Activated CD8-positive, alpha-beta T cell treated with anti-CD3 and anti-CD28 coated beads, Interleukin-2, amount 10 ng/mL, durations not matched to agents 7 days and 5 days (primary cell): ENCODE measurements at regions of chr7 and their contacts with region 1.

Region 1: GRCh38 chr7:24290004-24290641 is 6.1 kb downstream of the NPY start:
- DNase-seq: peak; percentile 57
- ATAC-seq: peak; percentile 89
- H3K4me3 Mint-ChIP-seq: no peak overlapping the region
- H3K27ac Mint-ChIP-seq: no peak overlapping the region
- H3K4me1 Mint-ChIP-seq: peaks cover 10% of the 10 kb centered on the region
- H3K27me3 Mint-ChIP-seq: peaks cover 29% of the 10 kb centered on the region

Region 2: GRCh38 chr7:24227603-24228359 is 62.3 kb before region 1 on chr7:
- CTCF ChIA-PET with region 1: no interaction called
- POLR2A ChIA-PET with region 1: no interaction called
- DNase-seq: peak; percentile 25
- ATAC-seq: peak; percentile 79
- H3K4me3 Mint-ChIP-seq: no peak overlapping the region
- H3K27ac Mint-ChIP-seq: no peak overlapping the region
- H3K4me1 Mint-ChIP-seq: peaks cover 15% of the 10 kb centered on the region
- H3K27me3 Mint-ChIP-seq: peaks cover 21% of the 10 kb centered on the region

Region 3: GRCh38 chr7:24665564-24666294 is 375.6 kb after region 1 on chr7:
- CTCF ChIA-PET with region 1: interaction called, 14 read pairs
- POLR2A ChIA-PET with region 1: no interaction called
- DNase-seq: peak; percentile 62
- ATAC-seq: no peak
- H3K4me3 Mint-ChIP-seq: no peak overlapping the region
- H3K27ac Mint-ChIP-seq: no peak overlapping the region
- H3K4me1 Mint-ChIP-seq: no peaks in the 10 kb centered on the region
- H3K27me3 Mint-ChIP-seq: no peaks in the 10 kb centered on the region